MCF 10A (cell line): ENCODE measurements at regions of chr15 and their contacts with region 1.

Region 1: DNA sequence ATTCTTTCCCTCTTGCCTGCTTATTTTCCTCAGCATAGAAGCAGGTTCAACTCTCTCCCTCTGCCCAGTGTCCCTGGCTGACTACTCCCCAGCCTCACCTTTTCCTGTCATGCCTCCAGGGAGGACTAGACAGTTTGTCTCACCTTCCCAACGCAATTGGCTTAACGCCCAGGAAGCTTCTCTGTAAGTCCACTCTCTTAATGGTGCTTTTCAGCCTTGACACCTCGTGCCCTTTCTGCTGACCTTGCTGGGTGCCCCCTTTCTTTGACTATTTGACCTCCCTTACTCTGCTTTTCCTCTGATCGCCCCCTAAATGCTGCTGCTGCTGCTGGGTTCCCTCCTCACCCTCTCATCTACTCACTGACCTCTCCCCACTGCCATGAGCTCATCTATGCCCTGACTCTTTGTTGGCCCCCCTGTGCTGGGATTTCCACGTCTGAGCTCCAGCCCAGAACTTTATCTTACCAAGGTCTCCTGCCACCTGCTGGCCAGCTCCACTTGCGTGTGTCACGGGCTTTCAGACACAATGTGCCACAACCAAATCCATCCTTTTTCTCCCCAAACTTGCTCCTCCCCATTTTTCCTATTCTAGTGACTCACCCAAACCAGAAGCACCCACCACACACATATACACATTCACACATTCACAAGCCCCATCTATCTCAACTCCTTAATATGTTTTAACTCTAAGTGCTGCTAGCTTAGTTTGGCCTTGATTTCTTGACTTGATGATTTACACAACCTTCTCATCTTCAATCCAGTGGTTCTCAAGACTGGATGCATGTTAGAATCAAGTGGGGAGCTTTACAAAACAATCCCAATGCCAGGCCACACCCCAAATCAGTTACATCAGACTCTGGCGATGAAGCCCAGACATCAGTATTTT is 16.6 kb downstream of the EPB42 start:
- DNase-seq: peak; percentile 69
- H3K4me3 Mint-ChIP-seq: no peak overlapping the region
- H3K27ac Mint-ChIP-seq: peak overlapping the region; percentile 17
- H3K4me1 Mint-ChIP-seq: peaks cover 11% of the 10 kb centered on the region
- H3K27me3 Mint-ChIP-seq: no peaks in the 10 kb centered on the region
- CTCF ChIP-seq: peak; percentile 39

Region 2: GRCh38 chr15:43218908-43219706 is 14.8 kb after region 1 on chr15:
- CTCF ChIA-PET with region 1: interaction called, 28 read pairs
- POLR2A ChIA-PET with region 1: interaction called, 8 read pairs
- intact Hi-C with region 1: no loop called
- DNase-seq: peak; percentile 88
- H3K4me3 Mint-ChIP-seq: no peak overlapping the region
- H3K27ac Mint-ChIP-seq: peak overlapping the region; percentile 46
- H3K4me1 Mint-ChIP-seq: peaks cover 6% of the 10 kb centered on the region
- H3K27me3 Mint-ChIP-seq: no peaks in the 10 kb centered on the region
- CTCF ChIP-seq: peak; percentile 35